Aorta (tissue), 5 donors: ENCODE measurements at regions of chr9 and their contacts with region 1.

Region 1: DNA sequence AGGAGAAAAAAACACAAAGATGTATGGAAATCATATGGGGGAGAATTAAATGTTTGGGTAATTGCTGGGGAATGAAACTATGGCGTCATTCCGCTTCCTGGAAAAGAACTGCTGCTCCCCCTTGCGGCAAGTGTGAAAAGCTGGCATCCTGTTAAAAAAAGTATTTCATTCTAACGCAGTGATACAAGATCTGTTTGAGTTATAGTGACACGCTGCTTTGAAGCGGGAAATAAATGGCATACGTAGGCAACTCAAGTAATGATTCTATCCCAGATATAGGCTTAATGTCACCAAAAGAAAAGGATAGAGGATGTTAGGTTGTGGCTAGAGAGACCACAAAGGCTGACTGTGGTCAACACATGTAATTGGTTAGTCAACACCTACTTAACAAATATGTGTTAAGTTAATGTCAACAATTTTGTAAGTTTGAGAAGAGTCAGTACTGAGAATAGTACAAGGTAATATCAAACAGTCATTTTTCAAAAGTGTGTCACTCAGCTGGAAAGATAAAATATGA is 70.2 kb upstream of the ALDH1A1 start:
- DNase-seq: peak; percentile 61 to 74
- ATAC-seq: peak; percentile 87
- H3K4me3 ChIP-seq: no peak overlapping the region
- H3K27ac ChIP-seq: no peak overlapping the region
- H3K4me1 ChIP-seq: no peaks in the 10 kb centered on the region
- H3K27me3 ChIP-seq: no peaks in the 10 kb centered on the region

Region 2: GRCh38 chr9:72856972-72857623 is 166.0 kb before region 1 on chr9:
- intact Hi-C with region 1: loop called (anchors 5 kb)
- DNase-seq: no peak
- ATAC-seq: peak; percentile 88
- H3K4me3 ChIP-seq: no peak overlapping the region
- H3K27ac ChIP-seq: no peak overlapping the region
- H3K4me1 ChIP-seq: peaks cover 2 to 11% of the 10 kb centered on the region in 2 donors
- H3K27me3 ChIP-seq: no peaks in the 10 kb centered on the region

Region 3: DNA sequence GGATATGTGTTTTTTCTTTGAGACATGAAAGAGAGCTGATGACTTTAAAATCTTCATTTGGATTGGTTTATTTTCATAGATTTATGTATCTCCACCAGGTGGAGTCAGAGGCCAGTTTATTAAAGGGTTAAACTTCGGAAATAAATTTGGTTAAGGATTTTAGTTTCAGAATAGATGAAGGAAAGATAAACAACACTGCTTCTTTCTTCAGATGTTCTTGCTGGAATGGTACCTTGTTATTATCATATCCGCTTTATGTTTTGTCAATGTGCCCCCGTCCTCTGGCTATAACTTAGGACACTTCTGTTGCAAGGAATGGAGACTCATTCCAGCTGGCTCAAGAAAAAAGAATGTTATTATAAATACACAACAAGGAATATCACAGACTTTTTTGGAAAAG is 151.4 kb before region 1 on chr9:
- intact Hi-C with region 1: loop called in 1 of 2 experiments (anchors 5 kb)
- DNase-seq: no peak
- ATAC-seq: no peak
- H3K4me3 ChIP-seq: no peak overlapping the region
- H3K27ac ChIP-seq: no peak overlapping the region
- H3K4me1 ChIP-seq: no peaks in the 10 kb centered on the region
- H3K27me3 ChIP-seq: no peaks in the 10 kb centered on the region

Region 4: GRCh38 chr9:72882117-72882775 is 140.8 kb before region 1 on chr9:
- intact Hi-C with region 1: no loop called
- DNase-seq: peak; percentile 75 to 81
- ATAC-seq: peak; percentile 87
- H3K4me3 ChIP-seq: no peak overlapping the region
- H3K27ac ChIP-seq: peak overlapping the region; percentile 54 to 76
- H3K4me1 ChIP-seq: peaks cover 0 to 8% of the 10 kb centered on the region in 2 donors
- H3K27me3 ChIP-seq: no peaks in the 10 kb centered on the region

Region 5: GRCh38 chr9:72960446-72960845 is 62.6 kb before region 1 on chr9:
- intact Hi-C with region 1: no loop called
- DNase-seq: no peak
- ATAC-seq: no peak
- H3K4me3 ChIP-seq: no peak overlapping the region
- H3K27ac ChIP-seq: no peak overlapping the region
- H3K4me1 ChIP-seq: no peaks in the 10 kb centered on the region
- H3K27me3 ChIP-seq: no peaks in the 10 kb centered on the region

Region 6: GRCh38 chr9:72996114-72996513 is 27.0 kb before region 1 on chr9:
- intact Hi-C with region 1: no loop called
- DNase-seq: no peak
- ATAC-seq: no peak
- H3K4me3 ChIP-seq: no peak overlapping the region
- H3K27ac ChIP-seq: no peak overlapping the region
- H3K4me1 ChIP-seq: peaks cover 0 to 2% of the 10 kb centered on the region in 2 donors
- H3K27me3 ChIP-seq: no peaks in the 10 kb centered on the region